ENCODE measurements at regions of chr2 and their contacts with region 1.

Region 1: GRCh38 chr2:85728883-85729824 is 24.6 kb upstream of the ATOH8 start:
- DNase-seq: peak; percentile 92
- ATAC-seq: peak; percentile 98
- H3K4me3 Mint-ChIP-seq: no peak overlapping the region
- H3K27ac Mint-ChIP-seq: no peak overlapping the region
- H3K4me1 Mint-ChIP-seq: no peaks in the 10 kb centered on the region
- H3K27me3 Mint-ChIP-seq: no peaks in the 10 kb centered on the region; the same call in 1 of the 2 replicates
- CTCF ChIP-seq: peak; percentile 86

Region 2: GRCh38 chr2:85678794-85679672 is 50.1 kb before region 1 on chr2:
- CTCF ChIA-PET with region 1: interaction called, 21 read pairs
- POLR2A ChIA-PET with region 1: no interaction called
- DNase-seq: peak; percentile 92
- ATAC-seq: peak; percentile 96
- H3K4me3 Mint-ChIP-seq: no peak overlapping the region; the same call in 1 of the 2 replicates
- H3K27ac Mint-ChIP-seq: no peak overlapping the region
- H3K4me1 Mint-ChIP-seq: peaks cover 12% of the 10 kb centered on the region
- H3K27me3 Mint-ChIP-seq: peaks cover 5% of the 10 kb centered on the region
- CTCF ChIP-seq: peak; percentile 96

Region 3: DNA sequence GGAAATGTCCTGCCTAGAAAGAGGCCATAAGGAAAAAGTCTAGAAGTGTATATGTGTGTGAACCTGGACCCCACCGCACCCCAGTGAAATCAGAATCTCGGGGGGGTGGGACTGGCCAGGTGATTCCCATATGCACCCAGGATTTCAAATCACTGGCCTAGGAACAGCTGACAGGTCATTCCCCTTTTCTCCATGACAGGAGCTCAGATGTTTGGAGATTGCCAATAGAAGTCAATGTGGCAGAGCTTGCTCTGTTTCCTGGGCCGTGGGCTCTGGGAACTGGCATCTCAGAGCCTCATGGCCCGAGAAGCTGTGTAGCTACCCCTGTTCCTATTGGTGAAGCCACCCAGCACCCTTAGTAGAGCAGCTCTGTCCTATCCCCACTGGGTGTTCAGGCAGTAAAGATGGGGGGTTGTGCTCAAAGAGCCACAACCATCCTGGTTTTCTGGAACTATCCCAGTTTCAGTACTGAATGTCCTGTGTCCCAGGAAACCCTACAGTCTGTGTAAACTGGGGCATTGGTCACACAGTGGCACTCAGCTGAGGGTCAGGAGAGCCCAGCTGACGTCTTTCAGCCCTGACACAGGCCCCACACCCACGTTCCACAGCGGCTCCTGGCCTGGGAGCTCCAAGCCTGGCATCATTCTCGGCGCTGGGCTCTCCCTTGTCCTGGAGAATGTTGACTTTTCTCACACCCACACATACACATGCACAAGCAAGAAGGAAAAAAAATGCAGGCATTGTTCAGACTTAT is 16.1 kb before region 1 on chr2:
- CTCF ChIA-PET with region 1: interaction called, 17 read pairs
- POLR2A ChIA-PET with region 1: no interaction called
- DNase-seq: no peak
- ATAC-seq: no peak
- H3K4me3 Mint-ChIP-seq: no peak overlapping the region
- H3K27ac Mint-ChIP-seq: no peak overlapping the region
- H3K4me1 Mint-ChIP-seq: no peaks in the 10 kb centered on the region
- H3K27me3 Mint-ChIP-seq: peaks cover 1% of the 10 kb centered on the region
- CTCF ChIP-seq: no peak

Region 4: GRCh38 chr2:85750587-85751575 is 21.7 kb after region 1 on chr2:
- CTCF ChIA-PET with region 1: interaction called, 49 read pairs
- POLR2A ChIA-PET with region 1: no interaction called
- DNase-seq: peak; percentile 83
- ATAC-seq: peak; percentile 48
- H3K4me3 Mint-ChIP-seq: no peak overlapping the region
- H3K27ac Mint-ChIP-seq: no peak overlapping the region
- H3K4me1 Mint-ChIP-seq: peaks cover 10% of the 10 kb centered on the region
- H3K27me3 Mint-ChIP-seq: peaks cover 53% of the 10 kb centered on the region
- CTCF ChIP-seq: peak; percentile 56

Region 5: DNA sequence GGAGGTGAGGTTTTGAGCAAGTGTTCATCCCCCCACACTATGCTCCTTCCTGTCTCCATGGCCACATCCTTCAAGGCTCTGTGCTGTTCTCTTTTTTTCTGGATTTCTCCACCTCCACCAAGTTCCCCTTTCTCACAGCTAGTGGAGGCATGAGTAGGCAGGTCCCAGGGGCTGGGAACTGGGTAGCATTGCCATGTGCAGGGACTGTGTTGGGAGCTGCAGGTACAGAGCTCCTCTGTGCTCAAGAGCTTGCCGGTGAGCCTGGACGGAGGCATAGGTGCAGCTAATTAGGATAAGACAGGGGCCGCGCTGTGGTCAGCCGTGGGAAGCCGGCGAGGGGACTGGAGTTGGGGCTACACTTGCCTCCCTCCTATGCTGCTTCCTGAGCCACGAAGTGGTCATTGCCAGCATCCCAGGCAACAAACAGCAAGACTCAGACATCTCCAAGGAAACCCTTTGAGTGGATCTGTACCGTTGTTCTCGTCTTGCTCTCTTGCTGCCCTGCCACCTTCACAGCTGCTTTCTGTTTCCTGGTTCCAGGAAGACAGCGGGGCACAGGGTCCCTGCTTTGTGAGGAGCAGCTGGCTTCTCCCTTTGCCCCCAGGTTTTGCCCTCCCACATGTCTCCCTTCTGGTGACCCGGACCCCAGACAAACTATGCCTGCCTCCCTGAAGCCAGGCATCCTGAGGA is 61.5 kb after region 1 on chr2:
- CTCF ChIA-PET with region 1: interaction called, 13 read pairs
- POLR2A ChIA-PET with region 1: no interaction called
- DNase-seq: no peak
- ATAC-seq: no peak
- H3K4me3 Mint-ChIP-seq: no peak overlapping the region
- H3K27ac Mint-ChIP-seq: no peak overlapping the region
- H3K4me1 Mint-ChIP-seq: no peaks in the 10 kb centered on the region
- H3K27me3 Mint-ChIP-seq: no peaks in the 10 kb centered on the region
- CTCF ChIP-seq: no peak

Region 6: GRCh38 chr2:85806358-85807118 is 77.4 kb after region 1 on chr2:
- CTCF ChIA-PET with region 1: interaction called, 100 read pairs
- POLR2A ChIA-PET with region 1: no interaction called
- DNase-seq: no peak
- ATAC-seq: no peak
- H3K4me3 Mint-ChIP-seq: no peak overlapping the region
- H3K27ac Mint-ChIP-seq: no peak overlapping the region
- H3K4me1 Mint-ChIP-seq: no peaks in the 10 kb centered on the region
- H3K27me3 Mint-ChIP-seq: no peaks in the 10 kb centered on the region
- CTCF ChIP-seq: no peak

Region 7: GRCh38 chr2:85819811-85820510 is 90.8 kb after region 1 on chr2:
- CTCF ChIA-PET with region 1: interaction called, 100 read pairs
- POLR2A ChIA-PET with region 1: no interaction called
- DNase-seq: no peak
- ATAC-seq: no peak
- H3K4me3 Mint-ChIP-seq: no peak overlapping the region
- H3K27ac Mint-ChIP-seq: no peak overlapping the region
- H3K4me1 Mint-ChIP-seq: peaks cover 6% of the 10 kb centered on the region
- H3K27me3 Mint-ChIP-seq: peaks cover 3% of the 10 kb centered on the region; the same call in 1 of the 2 replicates
- CTCF ChIP-seq: no peak